ENCODE measurements at regions of chr2 and their contacts with region 1.

Region 1: DNA sequence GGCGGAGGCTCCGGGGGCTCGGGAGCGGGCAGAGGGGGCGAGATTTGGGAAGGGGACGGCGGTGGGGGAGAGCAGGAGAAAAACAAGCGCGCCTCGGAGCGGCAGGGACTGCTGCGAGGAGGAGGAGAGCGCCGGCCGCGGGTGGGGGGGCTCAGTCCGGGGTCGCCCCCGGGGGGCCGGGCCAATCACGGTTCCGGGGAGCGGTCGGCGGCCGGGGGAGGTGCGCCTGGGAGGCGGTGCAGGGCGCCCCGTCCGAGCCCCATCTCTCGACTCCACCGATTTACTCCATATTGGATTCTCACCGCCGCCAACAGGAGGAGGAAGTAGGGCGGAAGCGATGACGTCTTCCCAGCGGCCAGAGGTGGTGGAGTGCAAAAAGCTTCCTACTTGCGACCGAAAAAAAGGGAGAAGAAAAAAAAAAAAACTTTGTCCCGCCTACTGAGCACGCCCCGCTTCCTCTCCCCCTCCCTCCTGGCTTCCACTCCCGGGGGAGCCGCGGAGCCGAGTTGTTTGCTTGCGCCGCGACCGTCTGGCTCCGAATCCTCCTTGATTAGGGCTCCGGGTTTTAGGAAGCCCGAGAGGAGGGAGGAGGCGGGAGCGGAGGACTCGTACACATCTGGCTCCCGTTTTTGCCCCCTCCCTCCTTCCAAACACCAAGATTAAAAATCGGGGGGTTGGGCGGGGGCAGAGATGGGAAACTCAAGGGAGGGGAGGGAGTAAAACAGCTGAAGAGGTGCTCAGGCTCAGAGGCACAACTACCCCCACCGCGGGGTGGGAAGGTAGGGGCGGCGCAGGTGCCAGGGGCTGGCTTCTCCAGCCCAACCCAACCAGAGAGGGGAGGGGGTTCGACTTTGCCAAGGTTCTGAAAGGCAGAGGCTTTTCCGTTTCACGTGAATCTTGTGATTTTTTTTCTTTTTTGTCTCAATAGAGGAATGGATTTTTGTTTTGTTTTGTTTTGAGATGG is at the start of gene SPRED2:
- DNase-seq: peak; percentile 96
- ATAC-seq: peak; percentile 42 to 54 (median 46)
- H3K4me3 ChIP-seq: peak within 1 kb of the TSS; percentile 87
- H3K27ac ChIP-seq: peak within 1 kb of the TSS; percentile 75
- H3K4me1 ChIP-seq: peaks cover 19% of the 10 kb centered on the region
- H3K27me3 ChIP-seq: peaks cover 0 to 11% (median 0%) of the 10 kb centered on the region in 3 donors
- CTCF ChIP-seq: peak; percentile 9
- total RNA-seq, gene SPRED2: 8.5 to 16.9 (median 9.2) TPM

Region 2: DNA sequence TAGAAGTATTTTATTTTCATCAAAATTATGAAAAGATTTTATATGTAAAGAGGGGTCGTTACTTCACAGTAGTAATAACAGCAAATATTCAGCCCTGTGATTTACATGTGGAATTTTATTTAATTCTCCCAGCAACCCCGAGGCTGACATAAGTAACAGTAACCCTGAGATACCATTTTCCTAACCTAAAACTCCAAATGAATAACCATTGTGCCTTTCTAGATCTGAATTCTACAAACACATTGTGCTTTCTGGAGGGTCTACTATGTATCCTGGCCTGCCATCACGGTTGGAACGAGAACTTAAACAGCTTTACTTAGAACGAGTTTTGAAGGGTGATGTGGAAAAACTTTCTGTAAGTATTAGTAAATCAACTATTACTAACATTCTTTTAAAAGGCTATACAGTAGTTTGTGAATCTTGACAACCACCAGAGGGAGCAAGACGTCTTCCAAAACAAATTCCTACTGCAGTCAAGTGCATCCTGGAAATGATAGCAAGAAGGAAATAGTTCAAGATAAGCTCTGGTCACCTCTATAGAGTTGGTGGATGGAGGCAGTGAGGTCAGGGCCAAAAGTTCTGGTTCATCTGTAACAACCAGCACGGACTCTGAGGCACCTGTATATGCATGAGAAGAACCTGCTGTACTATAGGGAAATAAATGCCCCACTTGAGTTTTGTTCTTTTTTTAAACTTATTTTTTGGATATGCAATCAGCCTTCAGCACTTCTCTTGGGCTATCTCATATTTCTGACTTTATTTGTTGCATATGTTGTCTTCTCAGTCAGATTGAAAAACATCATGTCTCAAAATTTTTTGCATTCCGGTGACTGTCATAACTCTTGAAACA is 167.5 kb before region 1 on chr2:
- intact Hi-C with region 1: loop called in 1 of 2 experiments (anchors 2 kb)
- DNase-seq: no peak
- ATAC-seq: peak; percentile 49 to 80 (median 70)
- H3K4me3 ChIP-seq: no peak overlapping the region
- H3K27ac ChIP-seq: no peak overlapping the region
- H3K4me1 ChIP-seq: peaks cover 4% of the 10 kb centered on the region
- H3K27me3 ChIP-seq: no peaks in the 10 kb centered on the region
- CTCF ChIP-seq: peak; percentile 73

Region 3: GRCh38 chr2:65309708-65310107 is 122.8 kb before region 1 on chr2:
- intact Hi-C with region 1: loop called in 1 of 2 experiments (anchors 5 kb)
- DNase-seq: no peak
- ATAC-seq: peak in 3 of 4 donors; percentile 26 to 45 (median 44)
- H3K4me3 ChIP-seq: no peak overlapping the region
- H3K27ac ChIP-seq: no peak overlapping the region
- H3K4me1 ChIP-seq: no peaks in the 10 kb centered on the region
- H3K27me3 ChIP-seq: no peaks in the 10 kb centered on the region
- CTCF ChIP-seq: no peak

Region 4: DNA sequence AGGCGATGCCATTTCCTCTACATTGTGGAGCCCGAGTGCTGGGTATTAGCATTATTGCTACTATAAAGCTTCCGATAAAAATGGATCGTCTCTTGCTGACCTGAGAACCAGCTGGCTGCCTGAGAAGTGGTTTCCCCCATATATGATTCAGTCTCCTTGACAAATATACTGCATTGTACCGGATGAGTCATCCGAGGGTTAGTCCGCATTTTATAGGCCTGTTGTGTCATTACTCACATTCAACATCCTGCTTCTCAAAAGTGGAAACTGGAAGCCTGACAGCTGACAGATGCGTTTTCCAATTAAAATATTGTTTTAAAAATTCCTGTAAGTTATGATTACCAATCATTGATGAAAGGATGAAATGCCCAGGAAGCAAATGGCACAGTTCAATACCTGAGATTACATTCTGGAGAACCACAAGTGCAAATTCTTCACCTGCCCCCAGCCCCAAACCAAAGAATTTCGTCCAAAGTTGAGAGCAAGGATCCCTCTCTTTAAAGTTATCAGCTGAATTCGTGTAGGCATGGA is 65.8 kb before region 1 on chr2:
- intact Hi-C with region 1: loop called in 1 of 2 experiments (anchors 5 kb)
- DNase-seq: no peak
- ATAC-seq: peak; percentile 56 to 72 (median 61)
- H3K4me3 ChIP-seq: peak overlapping the region; percentile 18
- H3K27ac ChIP-seq: peak overlapping the region; percentile 59
- H3K4me1 ChIP-seq: peaks cover 10% of the 10 kb centered on the region
- H3K27me3 ChIP-seq: no peaks in the 10 kb centered on the region
- CTCF ChIP-seq: no peak

Region 5: GRCh38 chr2:65554765-65555591 is 122.5 kb after region 1 on chr2:
- intact Hi-C with region 1: loop called in 1 of 2 experiments (anchors 5 kb)
- DNase-seq: no peak
- ATAC-seq: peak in 2 of 4 donors; percentile 33 to 43
- H3K4me3 ChIP-seq: no peak overlapping the region
- H3K27ac ChIP-seq: no peak overlapping the region
- H3K4me1 ChIP-seq: no peaks in the 10 kb centered on the region
- H3K27me3 ChIP-seq: no peaks in the 10 kb centered on the region
- CTCF ChIP-seq: no peak